Ovary (tissue), 10 donors: ENCODE measurements at regions of chr14 and their contacts with region 1.

Region 1: DNA sequence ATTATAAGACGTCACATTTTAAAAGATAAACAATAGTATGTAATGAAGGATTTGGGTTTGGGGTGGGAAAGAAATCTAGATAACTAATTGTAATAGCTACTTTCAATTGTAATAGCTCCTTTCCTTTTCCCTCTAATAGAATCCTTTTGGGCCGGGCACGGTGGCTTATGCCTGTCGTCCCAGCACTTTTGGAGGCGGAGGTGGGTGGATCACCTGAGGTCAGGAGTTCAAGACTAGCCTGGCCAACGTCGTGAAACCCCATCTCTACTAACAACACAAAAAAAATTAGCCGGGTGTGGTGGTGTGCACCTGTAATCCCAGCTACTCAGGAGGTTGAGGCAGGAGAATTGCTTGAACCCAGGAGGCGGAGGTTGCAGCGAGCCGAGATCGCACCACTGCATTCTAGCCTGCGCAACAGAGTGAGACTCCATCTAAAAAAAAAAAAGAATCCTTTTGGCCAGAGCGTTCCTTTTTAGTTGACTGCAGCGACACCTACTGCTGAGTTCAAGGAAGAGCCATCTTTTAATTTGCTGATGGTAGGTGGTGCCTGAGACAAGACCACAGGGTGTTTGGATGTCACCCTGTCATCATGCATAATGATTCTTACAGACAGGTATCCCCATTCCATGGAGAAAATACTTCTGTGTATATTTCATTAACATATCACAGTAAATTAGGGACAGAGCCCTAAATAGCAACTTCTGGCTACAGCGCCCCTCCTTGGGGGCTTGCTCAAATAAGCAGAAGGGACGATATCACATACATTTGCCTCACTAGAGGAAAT is 79.5 kb downstream of the ARMH4 start:
- DNase-seq: peak; percentile 41 to 58 (median 50)
- H3K4me3 ChIP-seq: peak overlapping the region; percentile 11
- H3K27ac ChIP-seq: no peak overlapping the region
- H3K4me1 ChIP-seq: peaks cover 2% of the 10 kb centered on the region
- H3K27me3 ChIP-seq: no peaks in the 10 kb centered on the region
- CTCF ChIP-seq: peak; percentile 50 to 53 (median 52)
- EP300 ChIP-seq: no peak
- POLR2A ChIP-seq: no peak

Region 2: GRCh38 chr14:56745097-56745496 is 1327.4 kb before region 1 on chr14:
- intact Hi-C with region 1: no loop called
- DNase-seq: no peak
- H3K4me3 ChIP-seq: no peak overlapping the region
- H3K27ac ChIP-seq: no peak overlapping the region
- H3K4me1 ChIP-seq: no peaks in the 10 kb centered on the region
- H3K27me3 ChIP-seq: no peaks in the 10 kb centered on the region
- CTCF ChIP-seq: no peak
- EP300 ChIP-seq: no peak
- POLR2A ChIP-seq: no peak

Region 3: GRCh38 chr14:57480051-57480450 is 592.4 kb before region 1 on chr14:
- intact Hi-C with region 1: loop called (anchors 5 to 10 kb)
- DNase-seq: no peak
- H3K4me3 ChIP-seq: no peak overlapping the region
- H3K27ac ChIP-seq: peak overlapping the region in 1 of 2 donors; percentile 58
- H3K4me1 ChIP-seq: peaks cover 13% of the 10 kb centered on the region
- H3K27me3 ChIP-seq: no peaks in the 10 kb centered on the region
- CTCF ChIP-seq: no peak
- EP300 ChIP-seq: no peak
- POLR2A ChIP-seq: no peak

Region 4: GRCh38 chr14:57486767-57487379 is 585.6 kb before region 1 on chr14:
- intact Hi-C with region 1: loop called (anchors 5 to 10 kb)
- DNase-seq: no peak
- H3K4me3 ChIP-seq: no peak overlapping the region
- H3K27ac ChIP-seq: no peak overlapping the region
- H3K4me1 ChIP-seq: no peaks in the 10 kb centered on the region
- H3K27me3 ChIP-seq: no peaks in the 10 kb centered on the region
- CTCF ChIP-seq: peak; percentile 15 to 44 (median 37)
- EP300 ChIP-seq: no peak
- POLR2A ChIP-seq: no peak

Region 5: DNA sequence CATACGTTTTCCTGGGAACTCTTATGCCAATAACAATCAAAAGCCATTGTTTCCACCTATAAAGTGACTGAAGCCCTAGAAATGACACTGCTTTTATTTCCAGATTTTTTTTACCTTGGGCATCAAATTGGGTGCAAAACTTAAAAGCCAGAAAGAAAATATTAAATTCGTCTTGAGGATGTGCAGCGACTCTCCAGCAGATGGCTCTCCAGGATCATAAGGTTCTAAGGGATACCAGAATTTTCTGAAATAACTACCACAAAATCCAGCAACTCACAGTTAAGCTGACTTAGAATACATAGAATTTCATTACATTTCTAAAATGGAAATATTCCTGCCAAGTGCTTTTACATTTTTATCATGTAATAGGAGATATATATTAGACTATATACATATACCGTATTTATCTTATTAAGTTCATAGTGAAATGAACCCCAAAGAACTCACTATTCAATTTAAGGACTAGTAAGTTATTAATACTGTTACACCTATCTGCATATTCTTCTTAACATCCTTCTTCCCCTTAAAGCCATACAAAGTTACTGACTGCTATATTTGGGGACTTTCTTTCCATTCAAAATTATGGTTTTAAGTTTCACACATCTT is 35.6 kb after region 1 on chr14:
- intact Hi-C with region 1: no loop called
- DNase-seq: peak; percentile 28 to 62 (median 37)
- H3K4me3 ChIP-seq: no peak overlapping the region
- H3K27ac ChIP-seq: no peak overlapping the region
- H3K4me1 ChIP-seq: no peaks in the 10 kb centered on the region
- H3K27me3 ChIP-seq: no peaks in the 10 kb centered on the region
- CTCF ChIP-seq: peak; percentile 58 to 62 (median 59)
- EP300 ChIP-seq: no peak
- POLR2A ChIP-seq: no peak